ENCODE measurements at regions of chr1 and their contacts with region 1.

Region 1: DNA sequence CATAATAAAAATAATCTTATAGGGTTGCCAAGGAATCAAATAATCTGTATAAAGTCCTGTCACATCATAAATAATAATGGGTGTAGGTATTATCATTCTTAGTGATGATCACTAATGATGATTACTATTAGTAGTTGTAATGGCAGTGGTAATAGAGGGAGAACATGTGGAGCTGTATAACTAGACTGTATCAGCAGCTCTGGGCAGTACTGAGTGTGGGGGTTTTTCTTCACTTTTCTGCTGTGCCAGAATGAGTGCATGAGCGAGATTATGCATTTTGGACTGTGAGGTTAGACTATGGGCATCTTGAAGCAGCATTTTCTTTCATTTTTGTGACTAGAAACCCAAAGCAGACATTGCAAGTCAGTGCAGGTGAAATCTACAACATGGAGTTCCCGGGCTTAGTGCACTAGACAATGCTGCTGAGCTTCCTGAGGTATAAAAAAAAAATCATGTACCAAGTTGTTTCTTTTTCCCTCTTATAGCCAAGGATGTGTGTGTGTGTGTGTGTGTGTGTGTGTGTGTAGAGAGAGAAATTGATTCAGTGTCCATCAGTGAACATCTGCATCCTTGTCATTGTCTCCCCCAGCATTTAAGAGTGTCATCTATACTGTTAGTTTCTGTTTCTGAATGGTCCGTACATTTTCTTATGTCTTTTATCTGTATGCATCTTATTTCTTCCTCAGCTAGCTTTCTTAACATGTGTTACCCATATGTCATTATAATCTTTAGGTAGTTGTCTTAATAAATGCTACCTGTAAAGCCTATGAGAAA is 86.6 kb downstream of the GIPC2 start:
- DNase-seq: no peak
- H3K4me3 Mint-ChIP-seq: no peak overlapping the region
- H3K27ac Mint-ChIP-seq: no peak overlapping the region
- H3K4me1 Mint-ChIP-seq: no peaks in the 10 kb centered on the region
- H3K27me3 Mint-ChIP-seq: no peaks in the 10 kb centered on the region

Region 2: DNA sequence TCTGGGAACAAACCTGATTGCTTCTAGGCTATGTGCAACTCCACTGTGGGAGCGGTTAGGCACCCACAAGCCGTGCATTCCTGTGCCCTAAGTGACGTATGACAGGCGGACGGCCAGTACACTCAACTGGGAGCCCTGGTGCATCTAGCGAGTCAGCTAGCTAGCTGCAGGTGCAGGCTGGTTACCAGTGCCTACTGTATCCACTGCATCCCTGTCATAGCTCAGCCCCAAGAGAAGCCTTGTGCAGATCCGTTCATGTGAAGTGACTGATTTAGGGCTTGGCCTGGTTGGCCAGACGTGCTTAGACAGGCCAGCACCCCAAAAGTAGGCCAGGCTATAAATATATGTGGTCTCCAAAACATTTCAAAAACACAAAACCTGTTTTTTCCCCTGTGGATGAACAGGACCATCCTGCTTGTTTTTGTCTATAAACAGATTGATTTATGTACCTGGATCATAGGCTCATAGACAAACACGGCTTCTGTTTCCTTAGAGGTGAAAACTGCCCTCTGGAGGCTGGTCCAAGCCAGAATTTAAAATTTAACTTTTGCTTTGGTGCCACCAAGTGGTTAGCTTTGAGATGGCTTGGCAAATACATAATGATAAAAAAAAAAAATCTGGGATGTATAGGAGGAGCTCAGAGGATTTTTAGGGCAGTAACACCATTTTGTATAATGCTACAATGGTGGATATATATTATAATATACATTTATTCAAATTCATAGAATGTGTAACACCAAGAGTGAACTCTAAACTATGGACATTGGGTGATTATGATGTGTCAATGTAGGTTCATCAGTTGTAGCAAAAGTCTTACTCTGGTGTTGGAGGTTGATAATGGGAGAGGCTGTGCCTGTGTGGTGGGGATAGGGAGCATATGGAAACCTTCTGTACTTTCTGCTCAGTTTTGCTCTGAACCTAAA is 18.1 kb before region 1 on chr1:
- CTCF ChIA-PET with region 1: interaction called, 13 read pairs
- POLR2A ChIA-PET with region 1: no interaction called
- DNase-seq: peak; percentile 63
- H3K4me3 Mint-ChIP-seq: no peak overlapping the region
- H3K27ac Mint-ChIP-seq: no peak overlapping the region
- H3K4me1 Mint-ChIP-seq: peaks cover 6% of the 10 kb centered on the region
- H3K27me3 Mint-ChIP-seq: no peaks in the 10 kb centered on the region

Region 3: DNA sequence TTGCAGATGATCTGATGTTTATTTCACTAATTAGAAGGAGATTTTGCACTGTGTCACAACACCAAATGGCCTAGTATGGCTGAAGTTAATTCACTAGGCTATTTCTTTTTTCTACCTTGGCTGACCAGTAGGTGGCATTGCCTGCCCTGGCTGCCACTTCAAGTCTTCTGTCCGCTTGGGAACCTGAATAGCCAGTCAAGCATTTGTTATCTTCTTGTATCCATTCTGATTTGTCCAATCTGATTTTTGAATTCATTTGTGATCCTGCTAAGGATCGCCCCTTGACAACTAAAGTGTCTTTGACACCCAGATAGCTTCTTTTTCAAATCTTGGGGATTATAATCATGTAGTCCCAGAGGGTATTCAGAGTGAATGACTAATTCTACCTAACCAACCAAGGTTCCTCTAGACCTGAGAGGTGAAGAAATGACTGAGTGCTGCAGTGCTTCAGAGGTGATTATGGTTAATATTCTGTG is 12.8 kb after region 1 on chr1:
- CTCF ChIA-PET with region 1: interaction called, 38 read pairs
- POLR2A ChIA-PET with region 1: interaction called, 3 read pairs
- DNase-seq: peak; percentile 38
- H3K4me3 Mint-ChIP-seq: no peak overlapping the region
- H3K27ac Mint-ChIP-seq: no peak overlapping the region
- H3K4me1 Mint-ChIP-seq: peaks cover 19% of the 10 kb centered on the region
- H3K27me3 Mint-ChIP-seq: peaks cover 19% of the 10 kb centered on the region

Region 4: GRCh38 chr1:78370356-78370755 is 238.0 kb after region 1 on chr1:
- CTCF ChIA-PET with region 1: no interaction called
- POLR2A ChIA-PET with region 1: no interaction called
- DNase-seq: no peak
- H3K4me3 Mint-ChIP-seq: no peak overlapping the region
- H3K27ac Mint-ChIP-seq: no peak overlapping the region
- H3K4me1 Mint-ChIP-seq: no peaks in the 10 kb centered on the region
- H3K27me3 Mint-ChIP-seq: no peaks in the 10 kb centered on the region